Body of pancreas (tissue), 4 donors: ENCODE measurements at regions of chr9 and their contacts with region 1.

Region 1: DNA sequence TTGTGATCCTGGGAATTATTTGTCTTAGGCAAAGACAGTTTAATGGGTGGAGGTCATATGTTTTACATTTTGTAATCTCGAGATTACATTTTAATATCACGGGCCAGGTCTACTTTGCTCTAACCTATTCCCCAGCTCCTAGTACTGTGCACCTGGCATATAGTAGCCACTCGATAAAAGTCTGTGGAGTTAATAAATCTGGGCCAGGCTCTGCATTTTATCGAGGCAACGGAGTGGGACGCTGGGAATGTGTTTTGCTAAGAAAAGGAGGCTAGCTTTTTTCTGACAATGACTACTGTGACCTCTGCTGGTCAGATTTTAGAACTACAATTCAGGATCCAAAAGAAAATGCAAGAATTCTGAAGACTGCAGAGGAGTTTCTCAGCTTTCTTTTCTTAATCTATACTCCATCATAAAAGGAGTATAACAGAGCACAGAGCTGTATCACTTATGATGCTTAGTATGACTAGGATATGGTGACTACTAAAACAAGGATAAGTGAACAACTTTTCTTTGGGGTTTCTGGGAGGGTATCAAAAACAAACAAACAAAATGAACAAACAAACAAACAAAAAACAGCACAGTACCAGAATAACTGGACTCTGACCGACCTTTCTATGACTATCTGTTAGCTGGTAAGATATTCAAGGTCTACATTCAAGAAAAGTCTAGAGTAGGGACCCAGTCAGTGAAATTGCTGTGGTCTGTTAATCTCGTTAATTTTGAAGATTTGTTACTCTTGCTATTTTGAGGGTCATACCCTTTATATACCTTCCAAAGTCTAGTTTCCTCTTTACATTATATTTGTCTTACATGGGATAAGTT is 46.1 kb upstream of the CER1 start:
- DNase-seq: peak; percentile 15 to 22 (median 18)
- ATAC-seq: peak; percentile 68
- H3K4me3 ChIP-seq: no peak overlapping the region
- H3K27ac ChIP-seq: no peak overlapping the region
- H3K4me1 ChIP-seq: no peaks in the 10 kb centered on the region
- H3K27me3 ChIP-seq: no peaks in the 10 kb centered on the region
- CTCF ChIP-seq: peak; percentile 55 to 70 (median 63)
- POLR2A ChIP-seq: no peak

Region 2: DNA sequence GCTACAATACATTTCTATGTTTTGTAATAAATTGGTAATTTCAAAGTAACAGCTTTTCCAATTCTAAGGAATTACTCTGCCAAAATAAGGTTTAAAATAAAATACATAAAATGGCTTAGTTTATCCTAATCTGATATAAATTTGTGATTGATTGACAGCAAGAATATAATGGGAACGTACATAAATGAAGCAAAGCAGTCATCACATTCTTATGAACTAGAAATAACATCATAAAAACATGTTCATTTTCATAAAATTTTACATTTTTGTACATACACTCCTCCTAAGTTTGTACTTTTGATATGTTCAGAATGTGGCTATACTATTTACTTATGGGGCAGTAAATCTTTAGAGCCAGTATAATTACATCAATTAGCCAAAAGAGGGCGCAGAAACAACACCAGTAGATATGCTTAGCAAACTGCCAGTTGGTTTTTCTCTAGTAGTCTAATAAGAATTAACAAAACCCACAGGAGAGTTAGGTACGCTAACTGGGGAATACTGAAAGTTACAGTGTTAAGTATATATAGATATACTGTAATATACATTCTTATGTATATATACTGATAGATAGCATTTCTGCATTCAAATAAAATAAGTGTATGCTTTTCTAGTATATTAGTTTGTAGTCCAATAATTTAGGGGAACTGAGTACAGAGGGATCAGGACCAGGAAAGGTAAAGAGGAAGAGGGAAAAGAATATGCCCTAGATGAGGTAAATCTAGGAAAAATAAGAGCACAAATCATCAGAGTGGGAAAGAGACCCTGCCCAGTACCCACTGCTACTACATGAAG is 152.2 kb before region 1 on chr9:
- intact Hi-C with region 1: loop called (anchors 10 kb)
- DNase-seq: peak in 1 of 4 donors; percentile 17
- ATAC-seq: peak; percentile 68
- H3K4me3 ChIP-seq: no peak overlapping the region
- H3K27ac ChIP-seq: no peak overlapping the region
- H3K4me1 ChIP-seq: peaks cover 12% of the 10 kb centered on the region
- H3K27me3 ChIP-seq: no peaks in the 10 kb centered on the region
- CTCF ChIP-seq: peak; percentile 26 to 68 (median 60)
- POLR2A ChIP-seq: no peak

Region 3: GRCh38 chr9:15942831-15943424 is 1174.3 kb after region 1 on chr9:
- intact Hi-C with region 1: no loop called
- DNase-seq: no peak
- ATAC-seq: no peak
- H3K4me3 ChIP-seq: no peak overlapping the region
- H3K27ac ChIP-seq: no peak overlapping the region
- H3K4me1 ChIP-seq: no peaks in the 10 kb centered on the region
- H3K27me3 ChIP-seq: no peaks in the 10 kb centered on the region
- CTCF ChIP-seq: no peak
- POLR2A ChIP-seq: no peak